Calu3 (cell line): ENCODE measurements at regions of chr5 and their contacts with region 1.

Region 1: GRCh38 chr5:155815248-155815647 is 511.7 kb upstream of the SGCD start:
- DNase-seq: no peak
- H3K4me3 Mint-ChIP-seq: no peak overlapping the region
- H3K27ac Mint-ChIP-seq: no peak overlapping the region
- H3K4me1 Mint-ChIP-seq: no peaks in the 10 kb centered on the region
- H3K27me3 Mint-ChIP-seq: no peaks in the 10 kb centered on the region
- CTCF ChIP-seq: no peak

Region 2: GRCh38 chr5:155839251-155840039 is 24.2 kb after region 1 on chr5:
- CTCF ChIA-PET with region 1: no interaction called
- intact Hi-C with region 1: no loop called
- DNase-seq: no peak
- H3K4me3 Mint-ChIP-seq: no peak overlapping the region
- H3K27ac Mint-ChIP-seq: no peak overlapping the region
- H3K4me1 Mint-ChIP-seq: no peaks in the 10 kb centered on the region
- H3K27me3 Mint-ChIP-seq: no peaks in the 10 kb centered on the region
- CTCF ChIP-seq: no peak

Region 3: GRCh38 chr5:155978850-155979249 is 163.6 kb after region 1 on chr5:
- CTCF ChIA-PET with region 1: no interaction called
- intact Hi-C with region 1: no loop called
- DNase-seq: no peak
- H3K4me3 Mint-ChIP-seq: no peak overlapping the region
- H3K27ac Mint-ChIP-seq: no peak overlapping the region
- H3K4me1 Mint-ChIP-seq: no peaks in the 10 kb centered on the region
- H3K27me3 Mint-ChIP-seq: peaks cover 22% of the 10 kb centered on the region
- CTCF ChIP-seq: no peak

Region 4: GRCh38 chr5:156956321-156956720 is 1141.1 kb after region 1 on chr5:
- CTCF ChIA-PET with region 1: interaction called, 13 read pairs
- intact Hi-C with region 1: no loop called
- DNase-seq: no peak
- H3K4me3 Mint-ChIP-seq: no peak overlapping the region
- H3K27ac Mint-ChIP-seq: no peak overlapping the region
- H3K4me1 Mint-ChIP-seq: no peaks in the 10 kb centered on the region
- H3K27me3 Mint-ChIP-seq: no peaks in the 10 kb centered on the region
- CTCF ChIP-seq: no peak